ENCODE measurements at regions of chr19 and their contacts with region 1.

Region 1: DNA sequence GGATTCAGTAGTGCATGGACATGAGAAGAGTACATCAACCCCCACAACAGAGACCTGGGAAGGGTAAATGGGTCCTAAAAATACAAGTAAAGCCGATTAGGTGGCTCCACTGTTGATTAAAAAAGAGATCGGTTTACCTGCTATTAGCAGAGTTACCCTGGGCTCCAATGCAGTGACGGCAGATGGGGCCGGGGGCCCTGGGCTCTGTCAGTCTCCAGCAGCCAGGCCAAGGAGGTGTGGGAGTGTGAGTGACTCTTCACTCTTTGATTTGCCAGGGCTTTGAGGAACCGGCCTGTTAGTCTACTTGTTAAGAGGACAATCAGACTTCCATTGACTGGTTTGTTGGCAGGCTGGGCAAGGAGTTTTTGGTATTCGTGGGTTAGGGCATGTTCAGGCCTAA is 1368.7 kb downstream of the UQCRFS1 start:
- DNase-seq: no peak
- H3K4me3 Mint-ChIP-seq: no peak overlapping the region
- H3K27ac Mint-ChIP-seq: no peak overlapping the region
- H3K4me1 Mint-ChIP-seq: no peaks in the 10 kb centered on the region
- H3K27me3 Mint-ChIP-seq: no peaks in the 10 kb centered on the region

Region 2: GRCh38 chr19:27858981-27859581 is 14.8 kb after region 1 on chr19:
- CTCF ChIA-PET with region 1: no interaction called
- POLR2A ChIA-PET with region 1: no interaction called
- DNase-seq: no peak
- H3K4me3 Mint-ChIP-seq: no peak overlapping the region
- H3K27ac Mint-ChIP-seq: no peak overlapping the region
- H3K4me1 Mint-ChIP-seq: no peaks in the 10 kb centered on the region
- H3K27me3 Mint-ChIP-seq: no peaks in the 10 kb centered on the region

Region 3: GRCh38 chr19:28823338-28823961 is 979.2 kb after region 1 on chr19:
- CTCF ChIA-PET with region 1: no interaction called
- POLR2A ChIA-PET with region 1: interaction called, 16 read pairs
- DNase-seq: no peak
- H3K4me3 Mint-ChIP-seq: no peak overlapping the region
- H3K27ac Mint-ChIP-seq: no peak overlapping the region
- H3K4me1 Mint-ChIP-seq: no peaks in the 10 kb centered on the region
- H3K27me3 Mint-ChIP-seq: no peaks in the 10 kb centered on the region